ENCODE measurements at regions of chr17 and their contacts with region 1.

Region 1: DNA sequence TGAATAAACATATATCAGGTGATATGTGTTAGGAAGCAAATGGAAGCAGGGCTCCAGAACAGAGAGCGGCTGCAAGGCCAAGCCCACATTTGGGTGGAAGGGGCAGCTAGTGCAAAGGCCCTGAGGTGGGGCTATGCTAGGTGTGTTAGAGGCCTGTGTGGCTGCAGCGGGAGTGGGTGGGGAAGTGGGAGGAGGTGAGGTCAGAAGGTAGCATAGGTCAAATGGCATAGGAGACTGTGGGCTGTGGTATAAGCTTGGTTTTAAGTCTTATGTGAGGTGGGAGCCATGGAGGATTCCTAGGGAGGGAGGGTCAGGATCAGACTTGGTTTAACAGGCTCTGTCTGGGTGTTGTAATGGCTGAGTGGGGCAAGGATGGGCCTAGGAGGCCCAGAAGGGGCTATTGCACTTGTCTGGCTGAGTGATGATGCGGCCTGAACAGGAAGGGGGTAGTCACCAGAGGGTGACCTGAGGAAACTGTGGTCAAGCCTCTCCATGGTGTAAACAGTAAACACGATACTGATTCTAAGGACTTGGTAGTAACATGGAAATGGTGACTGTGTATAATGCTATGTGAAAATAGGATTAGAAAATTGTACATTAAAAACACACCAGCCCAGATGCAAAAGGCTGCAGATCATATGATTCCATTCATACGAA is 31.1 kb downstream of the RAI1 start:
- DNase-seq: no peak
- H3K4me3 ChIP-seq: no peak overlapping the region
- H3K27ac ChIP-seq: no peak overlapping the region
- H3K4me1 ChIP-seq: peaks cover 10% of the 10 kb centered on the region
- H3K27me3 ChIP-seq: no peaks in the 10 kb centered on the region
- CTCF ChIP-seq: no peak
- EP300 ChIP-seq: no peak
- POLR2A ChIP-seq: no peak

Region 2: DNA sequence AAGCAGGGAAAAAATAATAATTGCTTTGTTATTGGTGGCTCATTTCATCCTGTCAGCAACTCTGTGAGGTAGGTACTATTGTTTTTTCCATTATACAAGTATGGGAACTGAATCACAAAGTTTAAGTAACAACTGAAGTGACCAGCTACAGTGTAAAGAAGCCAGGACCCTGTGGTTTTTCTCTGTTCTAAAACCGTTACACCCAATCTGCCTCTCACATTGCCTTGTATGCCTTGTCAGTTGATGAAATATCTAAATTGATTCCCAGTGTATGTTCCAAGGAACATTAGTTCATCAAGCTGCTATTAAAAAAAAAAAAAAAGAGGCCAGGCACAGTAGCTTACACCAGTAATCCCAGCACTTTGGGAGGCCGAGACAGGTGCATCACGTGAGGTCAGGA is 1490.0 kb before region 1 on chr17:
- intact Hi-C with region 1: loop called in 1 of 4 experiments (anchors 10 kb)
- DNase-seq: no peak
- H3K4me3 ChIP-seq: no peak overlapping the region
- H3K27ac ChIP-seq: no peak overlapping the region
- H3K4me1 ChIP-seq: no peaks in the 10 kb centered on the region
- H3K27me3 ChIP-seq: no peaks in the 10 kb centered on the region
- CTCF ChIP-seq: no peak
- EP300 ChIP-seq: no peak
- POLR2A ChIP-seq: no peak

Region 3: GRCh38 chr17:18025945-18026776 is 313.8 kb after region 1 on chr17:
- intact Hi-C with region 1: no loop called
- DNase-seq: no peak
- H3K4me3 ChIP-seq: no peak overlapping the region
- H3K27ac ChIP-seq: no peak overlapping the region
- H3K4me1 ChIP-seq: no peaks in the 10 kb centered on the region
- H3K27me3 ChIP-seq: no peaks in the 10 kb centered on the region
- CTCF ChIP-seq: no peak
- EP300 ChIP-seq: no peak
- POLR2A ChIP-seq: no peak